HCT116 (cell line): ENCODE measurements at regions of chr16 and their contacts with region 1.

Region 1: DNA sequence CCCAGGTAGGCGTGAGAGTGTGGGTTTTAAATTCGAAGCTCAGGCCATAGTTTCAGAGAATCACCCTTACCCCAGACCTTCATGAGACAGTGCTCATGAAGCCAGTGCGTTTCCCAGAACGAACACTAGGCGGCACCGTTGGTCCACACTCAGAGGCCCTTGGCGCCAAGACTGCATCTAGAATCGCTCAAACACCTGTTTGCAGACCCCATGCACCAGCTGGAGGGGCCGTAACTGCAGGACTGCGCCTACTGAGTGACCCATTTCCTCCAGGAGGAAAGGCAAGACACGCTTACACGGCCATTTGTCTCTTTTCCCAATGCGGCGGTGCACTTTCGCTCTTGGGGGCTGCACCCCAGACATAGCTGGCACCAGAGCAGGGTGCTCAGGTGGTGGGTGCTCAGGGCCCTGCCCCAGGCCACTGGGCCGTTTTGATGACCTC is 34.0 kb downstream of the ADGRG5 start:
- DNase-seq: peak; percentile 38
- ATAC-seq: peak; percentile 92
- H3K4me3 ChIP-seq: no peak overlapping the region
- H3K27ac ChIP-seq: no peak overlapping the region
- H3K4me1 ChIP-seq: no peaks in the 10 kb centered on the region
- H3K27me3 ChIP-seq: no peaks in the 10 kb centered on the region
- CTCF ChIP-seq: peak; percentile 93 to 98 (median 97)
- POLR2A ChIP-seq: no peak
- RAD21 ChIP-seq: peak; percentile 96

Region 2: DNA sequence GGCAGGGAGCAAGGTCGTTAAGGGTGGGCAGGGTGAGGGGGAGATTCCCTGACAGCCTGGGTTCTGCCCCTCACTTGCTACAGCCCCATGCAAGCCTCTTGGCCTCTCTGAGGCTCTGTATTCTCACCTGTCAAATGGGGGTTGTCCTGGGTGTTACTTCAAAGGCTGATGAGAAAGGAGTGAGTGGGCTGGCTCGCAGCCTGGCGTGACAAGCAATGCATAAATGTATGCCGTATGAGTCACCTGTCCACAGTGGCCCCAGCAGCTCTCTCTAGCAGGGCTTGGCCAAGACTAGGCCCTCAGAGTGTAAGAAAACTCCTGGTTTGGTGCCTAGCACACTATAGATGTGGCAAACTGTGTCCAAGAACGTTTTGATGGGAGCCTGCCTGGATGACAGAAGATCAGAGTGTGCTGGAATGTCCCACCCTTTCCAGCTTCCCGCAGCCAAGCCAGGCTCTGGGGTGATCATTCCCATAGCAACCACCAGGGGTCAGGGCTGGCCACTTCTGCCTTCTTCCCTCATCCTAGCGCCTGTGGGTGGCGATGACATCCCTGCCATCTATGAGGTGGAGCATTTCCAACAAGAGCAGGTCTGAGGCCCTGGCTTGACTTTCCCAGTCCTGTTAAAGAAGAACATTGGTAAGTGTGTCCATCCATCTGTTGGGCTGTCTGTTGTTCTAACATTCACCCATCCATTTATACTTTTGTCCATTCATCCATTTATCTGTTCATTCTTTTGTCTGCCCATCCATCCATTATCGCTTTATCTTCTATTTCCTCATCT is 14.8 kb after region 1 on chr16:
- CTCF ChIA-PET with region 1: interaction called, 16 read pairs
- POLR2A ChIA-PET with region 1: no interaction called
- RAD21 ChIA-PET with region 1: interaction called, 3 to 6 read pairs
- intact Hi-C with region 1: no loop called
- DNase-seq: peak; percentile 76
- ATAC-seq: peak; percentile 92
- H3K4me3 ChIP-seq: peak overlapping the region; percentile 30 to 54
- H3K27ac ChIP-seq: peak overlapping the region; percentile 42
- H3K4me1 ChIP-seq: peaks cover 11 to 21% of the 10 kb centered on the region in 2 experiments
- H3K27me3 ChIP-seq: no peaks in the 10 kb centered on the region
- CTCF ChIP-seq: peak; percentile 91 to 99 (median 93)
- POLR2A ChIP-seq: no peak
- RAD21 ChIP-seq: peak; percentile 93

Region 3: DNA sequence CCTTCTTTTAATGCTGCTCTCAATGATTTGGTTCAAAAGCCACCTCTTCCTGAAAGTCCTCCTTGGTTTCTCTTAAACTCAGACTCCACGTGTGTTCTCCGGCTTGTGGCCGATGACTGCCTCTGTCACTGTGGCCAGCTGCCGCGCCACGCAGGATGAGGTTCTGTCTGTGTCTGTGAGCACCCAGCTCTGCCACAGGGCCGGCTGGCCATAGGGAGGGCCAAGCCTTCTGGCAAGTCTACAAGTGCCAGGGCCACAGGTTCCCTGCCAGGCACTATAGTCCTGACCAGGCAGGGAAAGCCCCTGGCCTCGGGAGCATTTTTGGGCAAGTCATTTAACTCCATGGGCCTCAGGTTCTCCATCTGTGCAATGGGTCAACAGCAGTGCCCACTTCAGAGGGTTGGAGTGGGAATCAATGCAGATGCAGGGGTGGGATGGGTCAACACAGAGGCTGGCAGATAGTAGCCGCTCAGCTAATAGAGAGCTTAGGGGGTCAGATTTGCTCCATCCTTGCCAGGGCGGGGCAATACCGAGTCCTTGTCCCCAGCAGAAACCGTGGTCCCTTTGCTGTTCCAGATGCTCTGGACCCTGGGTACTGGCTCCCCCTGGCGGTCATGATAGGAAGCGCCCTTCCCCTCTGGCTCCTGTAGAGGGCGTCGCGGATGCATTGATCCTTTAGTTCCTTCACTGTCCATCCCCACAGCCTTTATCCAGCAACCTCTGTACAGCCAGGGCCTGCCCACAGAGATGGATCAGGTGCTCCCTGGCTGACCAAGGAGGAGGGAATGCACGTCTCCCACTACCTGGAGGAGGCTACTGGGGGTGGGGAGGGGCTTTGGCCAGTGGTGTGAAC is 72.4 kb after region 1 on chr16:
- CTCF ChIA-PET with region 1: interaction called, 4 read pairs
- POLR2A ChIA-PET with region 1: no interaction called
- RAD21 ChIA-PET with region 1: no interaction called
- intact Hi-C with region 1: loop called (anchors 1 kb)
- DNase-seq: peak; percentile 61
- ATAC-seq: peak; percentile 90
- H3K4me3 ChIP-seq: no peak overlapping the region
- H3K27ac ChIP-seq: no peak overlapping the region
- H3K4me1 ChIP-seq: peaks cover 0 to 12% of the 10 kb centered on the region in 2 experiments; a peak in 2 of 4 replicates
- H3K27me3 ChIP-seq: no peaks in the 10 kb centered on the region
- CTCF ChIP-seq: peak; percentile 100
- POLR2A ChIP-seq: no peak
- RAD21 ChIP-seq: peak; percentile 99

Region 4: GRCh38 chr16:57720142-57720575 is 143.7 kb after region 1 on chr16:
- CTCF ChIA-PET with region 1: interaction called, 5 read pairs
- POLR2A ChIA-PET with region 1: no interaction called
- RAD21 ChIA-PET with region 1: interaction called in 1 of 2 experiments, 3 read pairs
- intact Hi-C with region 1: loop called (anchors 1 kb)
- DNase-seq: no peak
- ATAC-seq: peak; percentile 96
- H3K4me3 ChIP-seq: no peak overlapping the region
- H3K27ac ChIP-seq: no peak overlapping the region
- H3K4me1 ChIP-seq: no peaks in the 10 kb centered on the region
- H3K27me3 ChIP-seq: 0 out of 2 replicates have a peak, but pooled peaks cover 7% of the 10 kb centered on the region
- CTCF ChIP-seq: peak; percentile 74 to 86 (median 83)
- POLR2A ChIP-seq: no peak
- RAD21 ChIP-seq: peak; percentile 75

Region 5: GRCh38 chr16:57734925-57735754 is 158.7 kb after region 1 on chr16:
- CTCF ChIA-PET with region 1: interaction called, 10 read pairs
- POLR2A ChIA-PET with region 1: no interaction called
- RAD21 ChIA-PET with region 1: interaction called in 1 of 2 experiments, 3 read pairs
- intact Hi-C with region 1: no loop called
- DNase-seq: peak; percentile 100
- ATAC-seq: peak; percentile 92
- H3K4me3 ChIP-seq: peak overlapping the region; percentile 91 to 96
- H3K27ac ChIP-seq: peak overlapping the region; percentile 79
- H3K4me1 ChIP-seq: peaks cover 8 to 24% of the 10 kb centered on the region in 2 experiments
- H3K27me3 ChIP-seq: no peaks in the 10 kb centered on the region
- CTCF ChIP-seq: no peak
- POLR2A ChIP-seq: peak; percentile 35
- RAD21 ChIP-seq: no peak

Region 6: DNA sequence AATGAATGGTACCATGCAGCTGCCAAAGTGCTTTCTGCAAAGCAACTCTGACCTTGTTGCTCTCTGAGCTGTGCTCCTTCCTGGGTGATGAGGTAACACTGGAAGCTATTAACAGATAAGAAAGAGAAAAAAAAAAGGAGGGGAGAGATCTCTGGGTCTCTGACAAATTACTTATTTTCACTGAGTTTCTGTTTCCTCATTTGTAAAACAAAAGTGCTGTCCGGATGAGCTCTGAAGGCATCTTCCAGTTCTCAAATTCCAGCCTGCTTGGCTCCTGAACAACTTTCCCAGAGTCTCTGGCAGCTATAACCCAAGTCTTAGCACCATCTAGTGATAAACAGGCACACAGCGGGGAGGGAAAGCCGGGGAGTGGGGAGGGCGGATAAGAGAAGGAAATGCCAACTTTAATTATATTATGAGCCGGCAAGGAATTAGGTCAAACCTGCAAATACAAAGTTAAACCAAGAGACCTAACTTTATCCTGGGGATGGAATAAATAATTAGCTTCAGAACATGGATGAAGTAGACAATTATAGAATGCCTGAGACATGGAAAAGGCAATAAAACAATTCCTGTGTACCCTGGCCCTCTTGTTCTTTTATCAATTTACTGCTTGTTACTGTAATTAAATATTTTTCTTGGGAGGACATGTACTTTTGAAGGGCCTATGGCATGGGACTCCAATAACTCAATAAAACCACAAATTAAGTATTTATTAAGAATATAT is 287.1 kb after region 1 on chr16:
- CTCF ChIA-PET with region 1: no interaction called
- POLR2A ChIA-PET with region 1: no interaction called
- RAD21 ChIA-PET with region 1: no interaction called
- intact Hi-C with region 1: loop called (anchors 5 kb)
- DNase-seq: peak; percentile 45
- ATAC-seq: peak; percentile 84
- H3K4me3 ChIP-seq: no peak overlapping the region
- H3K27ac ChIP-seq: no peak overlapping the region
- H3K4me1 ChIP-seq: peaks cover 13 to 36% of the 10 kb centered on the region in 2 experiments; a peak in 3 of 4 replicates
- H3K27me3 ChIP-seq: no peaks in the 10 kb centered on the region
- CTCF ChIP-seq: peak; percentile 58 to 97 (median 70)
- POLR2A ChIP-seq: no peak
- RAD21 ChIP-seq: peak; percentile 96

Region 7: GRCh38 chr16:58009856-58010416 is 433.5 kb after region 1 on chr16:
- CTCF ChIA-PET with region 1: no interaction called
- POLR2A ChIA-PET with region 1: no interaction called
- RAD21 ChIA-PET with region 1: no interaction called
- intact Hi-C with region 1: loop called (anchors 5 kb)
- DNase-seq: no peak
- ATAC-seq: no peak
- H3K4me3 ChIP-seq: no peak overlapping the region
- H3K27ac ChIP-seq: no peak overlapping the region
- H3K4me1 ChIP-seq: peaks cover 0 to 9% of the 10 kb centered on the region in 2 experiments; a peak in 1 of 4 replicates
- H3K27me3 ChIP-seq: no peaks in the 10 kb centered on the region
- CTCF ChIP-seq: no peak
- POLR2A ChIP-seq: no peak
- RAD21 ChIP-seq: no peak